Activated CD4-positive, alpha-beta T cell treated with anti-CD3 and anti-CD28 coated beads, Interleukin-2, amount 10 ng/mL, durations not matched to agents 7 days and 5 days (primary cell): ENCODE measurements at regions of chr4 and their contacts with region 1.

Region 1: GRCh38 chr4:80184053-80184790 is 13.1 kb upstream of the PRDM8 start:
- DNase-seq: peak; percentile 91
- H3K4me3 Mint-ChIP-seq: peak overlapping the region; percentile 91
- H3K27ac Mint-ChIP-seq: peak overlapping the region; percentile 97
- H3K4me1 Mint-ChIP-seq: peaks cover 57% of the 10 kb centered on the region
- H3K27me3 Mint-ChIP-seq: peaks cover 25% of the 10 kb centered on the region

Region 2: DNA sequence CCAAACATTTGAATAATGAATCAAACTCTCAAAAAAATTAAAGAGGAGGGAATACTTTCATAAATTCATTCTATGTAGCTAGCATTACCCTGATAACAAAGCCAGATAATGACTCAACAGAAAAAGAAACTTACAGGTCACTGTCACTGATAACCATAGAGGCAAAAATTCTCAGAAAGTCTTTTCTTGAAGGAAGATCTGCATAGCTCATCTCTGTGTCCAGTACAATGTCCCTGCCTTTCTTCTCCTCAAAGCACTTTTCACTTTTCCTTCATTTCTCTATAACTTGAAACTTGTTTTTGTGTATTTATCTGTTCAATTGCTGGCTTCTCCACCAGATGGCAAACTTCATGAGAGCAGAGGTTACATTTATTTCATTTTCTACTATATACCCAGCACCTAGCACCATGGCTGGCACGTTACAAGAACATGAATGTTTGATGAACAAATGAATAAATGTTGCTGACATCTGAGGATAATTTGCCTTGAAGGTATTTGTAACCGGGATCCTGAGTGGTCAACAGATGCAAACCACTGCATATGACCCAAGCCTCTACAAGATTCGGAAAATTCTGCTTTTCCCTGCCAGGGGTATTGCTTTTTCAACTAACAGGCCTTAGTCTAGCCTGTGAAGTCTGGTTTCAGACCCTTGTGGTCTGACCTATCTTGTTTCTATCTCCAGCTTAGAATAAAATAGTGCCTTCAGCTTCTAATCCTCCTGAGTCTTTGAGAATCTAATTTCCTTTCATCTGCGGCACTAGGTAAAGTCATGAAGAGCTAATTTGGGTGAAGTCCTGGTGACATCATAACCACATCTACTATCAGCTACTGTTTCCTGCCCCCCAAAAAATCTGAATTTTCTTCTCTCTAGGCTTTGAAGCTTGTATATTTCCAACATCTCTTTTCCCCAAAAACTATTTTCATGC is 58.7 kb before region 1 on chr4:
- CTCF ChIA-PET with region 1: interaction called, 91 read pairs
- POLR2A ChIA-PET with region 1: interaction called, 6 read pairs
- DNase-seq: peak; percentile 68
- H3K4me3 Mint-ChIP-seq: peak overlapping the region; percentile 23
- H3K27ac Mint-ChIP-seq: peak overlapping the region; percentile 84
- H3K4me1 Mint-ChIP-seq: peaks cover 55% of the 10 kb centered on the region
- H3K27me3 Mint-ChIP-seq: no peaks in the 10 kb centered on the region

Region 3: GRCh38 chr4:80138551-80139538 is 45.4 kb before region 1 on chr4:
- CTCF ChIA-PET with region 1: interaction called, 26 read pairs
- POLR2A ChIA-PET with region 1: no interaction called
- DNase-seq: peak; percentile 73
- H3K4me3 Mint-ChIP-seq: peak overlapping the region; percentile 36
- H3K27ac Mint-ChIP-seq: peak overlapping the region; percentile 89
- H3K4me1 Mint-ChIP-seq: peaks cover 59% of the 10 kb centered on the region
- H3K27me3 Mint-ChIP-seq: no peaks in the 10 kb centered on the region

Region 4: GRCh38 chr4:80153874-80154544 is 30.2 kb before region 1 on chr4:
- CTCF ChIA-PET with region 1: interaction called, 12 read pairs
- POLR2A ChIA-PET with region 1: no interaction called
- DNase-seq: no peak
- H3K4me3 Mint-ChIP-seq: no peak overlapping the region
- H3K27ac Mint-ChIP-seq: no peak overlapping the region
- H3K4me1 Mint-ChIP-seq: peaks cover 1% of the 10 kb centered on the region
- H3K27me3 Mint-ChIP-seq: peaks cover 1% of the 10 kb centered on the region

Region 5: GRCh38 chr4:80173401-80173800 is 10.8 kb before region 1 on chr4:
- CTCF ChIA-PET with region 1: interaction called, 72 read pairs
- POLR2A ChIA-PET with region 1: interaction called, 4 read pairs
- DNase-seq: peak; percentile 71
- H3K4me3 Mint-ChIP-seq: peak overlapping the region; percentile 60
- H3K27ac Mint-ChIP-seq: peak overlapping the region; percentile 92
- H3K4me1 Mint-ChIP-seq: peaks cover 57% of the 10 kb centered on the region
- H3K27me3 Mint-ChIP-seq: peaks cover 2% of the 10 kb centered on the region

Region 6: DNA sequence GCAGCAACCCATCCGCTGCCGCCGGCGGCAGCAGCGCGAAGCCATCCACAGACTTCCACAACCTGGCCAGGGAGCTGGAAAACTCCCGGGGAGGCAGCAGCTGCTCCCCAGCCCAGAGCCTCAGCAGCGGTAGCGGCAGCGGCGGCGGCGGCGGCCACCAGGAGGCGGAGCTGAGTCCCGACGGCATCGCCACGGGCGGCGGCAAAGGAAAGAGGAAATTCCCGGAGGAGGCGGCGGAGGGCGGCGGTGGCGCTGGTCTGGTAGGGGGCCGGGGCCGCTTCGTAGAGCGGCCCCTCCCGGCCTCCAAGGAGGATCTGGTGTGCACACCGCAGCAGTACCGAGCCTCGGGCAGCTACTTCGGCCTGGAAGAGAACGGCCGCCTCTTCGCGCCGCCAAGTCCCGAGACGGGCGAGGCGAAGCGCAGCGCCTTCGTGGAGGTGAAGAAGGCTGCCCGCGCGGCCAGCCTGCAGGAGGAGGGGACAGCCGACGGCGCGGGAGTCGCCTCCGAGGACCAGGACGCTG is 18.0 kb after region 1 on chr4:
- CTCF ChIA-PET with region 1: interaction called, 33 read pairs
- POLR2A ChIA-PET with region 1: no interaction called
- DNase-seq: peak; percentile 73
- H3K4me3 Mint-ChIP-seq: peak overlapping the region; percentile 70
- H3K27ac Mint-ChIP-seq: peak overlapping the region; percentile 63
- H3K4me1 Mint-ChIP-seq: peaks cover 26% of the 10 kb centered on the region
- H3K27me3 Mint-ChIP-seq: peaks cover 43% of the 10 kb centered on the region